Naive thymus-derived CD8-positive, alpha-beta T cell (primary cell): ENCODE measurements at regions of chr5 and their contacts with region 1.

Region 1: GRCh38 chr5:138213161-138214029 is at the start of gene CDC23:
- DNase-seq: peak; percentile 74 to 96 (median 92)
- ATAC-seq: peak; percentile 97 to 99
- H3K4me3 Mint-ChIP-seq: peak within 1 kb of the TSS; percentile 95 to 100 (median 98)
- H3K27ac Mint-ChIP-seq: peak within 1 kb of the TSS; percentile 94 to 99 (median 98)
- H3K4me1 Mint-ChIP-seq: peaks cover 12 to 28% (median 26%) of the 10 kb centered on the region in 4 donors
- H3K27me3 Mint-ChIP-seq: peaks cover 0 to 2% (median 0%) of the 10 kb centered on the region in 5 donors
- polyA plus RNA-seq, gene CDC23: 13.7 to 24.7 (median 17.2) TPM

Region 2: DNA sequence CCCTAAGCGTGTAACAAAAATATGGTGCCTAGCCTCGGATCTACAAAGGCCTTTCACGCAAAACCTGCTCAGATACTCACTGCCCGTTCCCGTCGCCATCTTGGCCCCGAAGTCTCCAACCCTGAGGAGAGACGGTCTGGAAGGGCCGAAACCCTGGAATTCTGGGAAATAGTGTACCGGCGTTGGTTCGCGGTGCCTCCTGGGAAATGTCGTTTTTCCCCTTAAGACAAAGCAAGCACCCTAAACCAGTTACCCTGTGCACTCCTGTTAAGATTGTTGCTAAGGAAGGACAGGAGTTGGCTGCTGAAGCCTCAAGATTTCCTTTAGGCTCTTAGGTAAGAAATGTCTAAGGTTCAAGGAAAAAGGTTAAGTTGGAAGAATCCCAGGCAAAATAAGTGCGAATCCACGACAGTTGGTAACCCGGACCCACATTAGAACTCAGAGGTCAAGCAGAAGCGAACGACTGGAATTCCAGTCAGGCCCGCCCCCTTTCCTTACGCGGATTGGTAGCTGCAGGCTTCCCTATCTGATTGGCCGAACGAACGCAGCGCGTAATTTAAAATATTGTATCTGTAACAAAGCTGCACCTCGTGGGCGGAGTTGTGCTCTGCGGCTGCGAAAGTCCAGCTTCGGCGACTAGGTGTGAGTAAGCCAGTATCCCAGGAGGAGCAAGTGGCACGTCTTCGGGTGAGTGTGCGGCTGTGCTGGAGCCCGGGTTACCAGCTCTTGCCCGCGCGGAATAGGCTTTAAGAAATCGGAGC is 34.7 kb before region 1 on chr5 and contains the starts of genes BRD8 and KIF20A:
- POLR2A ChIA-PET with region 1: interaction called, 18 read pairs
- DNase-seq: peak; percentile 76 to 95 (median 86)
- ATAC-seq: peak; percentile 84 to 91
- H3K4me3 Mint-ChIP-seq: peak within 1 kb of the TSS in 5 of 10 donors; percentile 6 to 67 (median 42)
- H3K27ac Mint-ChIP-seq: peak within 1 kb of the TSS in 3 of 10 donors; percentile 5 to 81 (median 9)
- H3K4me1 Mint-ChIP-seq: peaks cover 0 to 13% (median 6%) of the 10 kb centered on the region in 4 donors
- H3K27me3 Mint-ChIP-seq: no peaks in the 10 kb centered on the region
- polyA plus RNA-seq, gene BRD8: 24.0 to 37.7 (median 31.8) TPM
- polyA plus RNA-seq, gene KIF20A: not detected